ENCODE measurements at regions of chr1 and their contacts with region 1.

Region 1: GRCh38 chr1:201114236-201115131 is 2.3 kb upstream of the CACNA1S start:
- DNase-seq: peak; percentile 93 to 98
- ATAC-seq: peak; percentile 93 to 97
- H3K4me3 ChIP-seq: peak overlapping the region; percentile 80
- H3K27ac ChIP-seq: peak overlapping the region; percentile 87 to 89
- H3K4me1 ChIP-seq: peaks cover 8% of the 10 kb centered on the region
- CTCF ChIP-seq: peak; percentile 84
- EP300 ChIP-seq: no peak
- POLR2A ChIP-seq: peak; percentile 78
- RAD21 ChIP-seq: peak; percentile 90 to 91

Region 2: DNA sequence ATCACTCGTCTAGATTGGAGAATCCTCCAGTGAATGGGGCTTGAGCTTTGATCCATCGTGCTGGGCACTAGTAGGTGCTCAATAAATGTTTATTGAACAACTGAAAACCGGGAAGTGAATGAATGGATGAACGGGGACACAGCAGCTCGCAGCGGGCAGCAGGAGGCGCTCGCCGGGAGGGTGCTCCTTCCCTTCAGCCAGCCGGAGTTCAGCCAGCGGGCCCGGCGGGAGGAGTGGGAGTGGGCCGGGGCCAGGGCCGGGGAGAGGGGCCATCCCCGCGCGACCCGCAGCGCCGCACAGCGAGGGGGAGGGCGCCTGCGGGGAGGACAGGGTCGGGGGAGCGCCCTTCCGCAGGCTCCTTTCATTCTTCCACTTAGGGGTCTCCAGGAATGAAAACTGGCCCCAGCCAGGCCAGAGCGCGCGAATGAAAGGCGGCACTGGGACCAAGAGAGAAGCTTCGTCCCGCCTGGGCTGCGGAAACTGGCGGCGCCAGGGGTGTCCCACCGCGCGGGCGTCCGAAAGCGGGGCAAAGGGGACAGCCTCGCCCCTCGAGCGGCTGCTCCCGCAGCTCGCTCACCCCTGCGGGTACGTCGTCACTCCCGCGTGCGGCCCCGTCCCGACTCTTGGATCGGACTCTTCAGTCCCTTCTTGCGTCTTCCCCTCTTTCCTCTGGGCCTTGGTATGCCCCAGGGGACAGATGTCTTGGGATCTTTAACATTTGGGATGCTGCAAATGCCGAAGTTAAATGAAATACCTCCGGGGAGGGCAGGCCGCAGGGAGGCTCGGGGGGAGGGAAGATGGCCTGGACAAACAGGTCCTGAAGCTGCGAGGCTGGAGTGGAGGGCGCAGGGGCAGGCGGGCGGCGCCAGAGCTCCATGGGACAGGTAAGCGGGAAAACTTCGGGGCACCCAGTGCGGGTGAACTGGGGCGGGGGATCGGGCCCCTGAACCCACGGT is 223.4 kb before region 1 on chr1:
- CTCF ChIA-PET with region 1: interaction called, 10 read pairs
- POLR2A ChIA-PET with region 1: interaction called, 4 read pairs
- DNase-seq: peak; percentile 78 to 82
- ATAC-seq: peak; percentile 49 to 68
- H3K4me3 ChIP-seq: peak overlapping the region; percentile 68
- H3K27ac ChIP-seq: peak overlapping the region; percentile 100
- H3K4me1 ChIP-seq: peaks cover 51% of the 10 kb centered on the region
- CTCF ChIP-seq: peak; percentile 87
- EP300 ChIP-seq: no peak
- POLR2A ChIP-seq: peak; percentile 43
- RAD21 ChIP-seq: peak; percentile 61 to 77

Region 3: DNA sequence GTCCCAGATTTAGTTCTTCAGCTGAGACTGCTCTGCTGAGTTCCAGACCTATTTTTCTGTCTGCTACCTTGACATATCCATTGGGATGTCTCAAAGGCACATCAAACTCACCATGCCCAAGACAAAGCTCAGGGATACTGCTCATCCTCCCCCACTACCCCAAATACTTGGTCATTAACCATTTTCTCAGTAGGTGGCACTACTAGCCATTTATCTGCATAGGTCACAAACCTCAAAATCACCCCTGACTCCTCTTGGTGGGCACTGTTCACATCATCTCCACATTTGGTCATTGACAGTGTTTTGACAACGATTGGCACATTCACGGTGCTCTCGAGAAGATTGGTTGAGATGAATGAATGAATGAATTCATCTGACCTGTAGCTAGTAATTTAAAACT is 34.3 kb before region 1 on chr1:
- CTCF ChIA-PET with region 1: interaction called, 83 read pairs
- POLR2A ChIA-PET with region 1: no interaction called
- DNase-seq: no peak
- ATAC-seq: no peak; a peak in 1 of 6 replicates
- H3K4me3 ChIP-seq: no peak overlapping the region
- H3K27ac ChIP-seq: no peak overlapping the region
- H3K4me1 ChIP-seq: no peaks in the 10 kb centered on the region
- CTCF ChIP-seq: no peak
- EP300 ChIP-seq: no peak
- POLR2A ChIP-seq: no peak
- RAD21 ChIP-seq: no peak

Region 4: GRCh38 chr1:201096035-201096434 is 18.4 kb before region 1 on chr1:
- CTCF ChIA-PET with region 1: interaction called, 84 read pairs
- POLR2A ChIA-PET with region 1: no interaction called
- DNase-seq: no peak
- ATAC-seq: no peak
- H3K4me3 ChIP-seq: no peak overlapping the region
- H3K27ac ChIP-seq: no peak overlapping the region
- H3K4me1 ChIP-seq: no peaks in the 10 kb centered on the region
- CTCF ChIP-seq: no peak
- EP300 ChIP-seq: no peak
- POLR2A ChIP-seq: no peak
- RAD21 ChIP-seq: no peak